ENCODE measurements at regions of chr9 and their contacts with region 1.

Region 1: GRCh38 chr9:2032234-2032633 is 17.1 kb downstream of the SMARCA2 start:
- DNase-seq: no peak
- H3K4me3 Mint-ChIP-seq: no peak overlapping the region
- H3K27ac Mint-ChIP-seq: peak overlapping the region; percentile 61
- H3K4me1 Mint-ChIP-seq: peaks cover 68% of the 10 kb centered on the region
- H3K27me3 Mint-ChIP-seq: no peaks in the 10 kb centered on the region

Region 2: GRCh38 chr9:1726993-1727759 is 305.1 kb before region 1 on chr9:
- CTCF ChIA-PET with region 1: no interaction called
- POLR2A ChIA-PET with region 1: no interaction called
- intact Hi-C with region 1: no loop called
- DNase-seq: no peak
- H3K4me3 Mint-ChIP-seq: no peak overlapping the region
- H3K27ac Mint-ChIP-seq: no peak overlapping the region
- H3K4me1 Mint-ChIP-seq: no peaks in the 10 kb centered on the region
- H3K27me3 Mint-ChIP-seq: peaks cover 4% of the 10 kb centered on the region

Region 3: GRCh38 chr9:2014696-2015580 is 17.3 kb before region 1 on chr9 and contains the start of gene SMARCA2:
- CTCF ChIA-PET with region 1: interaction called, 3 read pairs
- POLR2A ChIA-PET with region 1: interaction called, 10 read pairs
- intact Hi-C with region 1: loop called (anchors 2 kb)
- DNase-seq: peak; percentile 98
- H3K4me3 Mint-ChIP-seq: peak within 1 kb of the TSS; percentile 99
- H3K27ac Mint-ChIP-seq: peak within 1 kb of the TSS; percentile 100
- H3K4me1 Mint-ChIP-seq: peaks cover 47% of the 10 kb centered on the region
- H3K27me3 Mint-ChIP-seq: peaks cover 4% of the 10 kb centered on the region
- total RNA-seq, gene SMARCA2: 95.1 to 100 TPM

Region 4: DNA sequence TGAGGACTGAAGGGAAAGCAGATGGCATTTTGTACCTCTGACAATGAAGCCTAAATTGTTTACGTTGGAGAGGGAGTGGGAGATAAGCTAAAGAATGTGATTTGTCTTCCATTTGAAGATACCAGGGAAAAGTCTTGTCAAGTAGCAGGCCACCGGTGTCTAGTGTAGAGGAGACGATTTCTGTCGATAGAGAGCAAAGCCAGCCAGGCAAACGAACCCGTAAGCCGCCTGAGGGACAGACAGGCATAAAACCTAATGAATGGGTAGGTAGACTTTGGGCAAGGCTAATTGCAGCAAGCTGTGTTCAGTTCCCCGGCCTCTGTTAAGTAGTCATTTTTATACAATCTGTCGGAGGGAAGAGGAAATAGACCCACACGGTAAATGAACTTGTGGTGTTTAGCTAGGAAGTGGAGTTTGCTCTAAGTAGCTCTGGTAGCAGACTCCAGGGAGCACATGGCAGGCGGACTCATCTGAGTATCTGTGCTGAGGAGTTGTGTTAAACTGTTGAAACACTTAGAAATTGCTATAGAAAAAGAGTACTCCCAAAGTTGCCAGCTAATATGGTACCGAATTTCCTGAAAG is 11.7 kb after region 1 on chr9:
- CTCF ChIA-PET with region 1: interaction called, 5 read pairs
- POLR2A ChIA-PET with region 1: interaction called, 4 read pairs
- intact Hi-C with region 1: loop called (anchors 1 kb)
- DNase-seq: no peak
- H3K4me3 Mint-ChIP-seq: no peak overlapping the region
- H3K27ac Mint-ChIP-seq: no peak overlapping the region
- H3K4me1 Mint-ChIP-seq: peaks cover 47% of the 10 kb centered on the region
- H3K27me3 Mint-ChIP-seq: no peaks in the 10 kb centered on the region

Region 5: GRCh38 chr9:2125906-2126305 is 93.7 kb after region 1 on chr9:
- CTCF ChIA-PET with region 1: no interaction called
- POLR2A ChIA-PET with region 1: no interaction called
- intact Hi-C with region 1: no loop called
- DNase-seq: no peak
- H3K4me3 Mint-ChIP-seq: peak overlapping the region; percentile 49
- H3K27ac Mint-ChIP-seq: peak overlapping the region; percentile 71
- H3K4me1 Mint-ChIP-seq: peaks cover 39% of the 10 kb centered on the region
- H3K27me3 Mint-ChIP-seq: no peaks in the 10 kb centered on the region